ENCODE measurements at regions of chr19 and their contacts with region 1.

Region 1: DNA sequence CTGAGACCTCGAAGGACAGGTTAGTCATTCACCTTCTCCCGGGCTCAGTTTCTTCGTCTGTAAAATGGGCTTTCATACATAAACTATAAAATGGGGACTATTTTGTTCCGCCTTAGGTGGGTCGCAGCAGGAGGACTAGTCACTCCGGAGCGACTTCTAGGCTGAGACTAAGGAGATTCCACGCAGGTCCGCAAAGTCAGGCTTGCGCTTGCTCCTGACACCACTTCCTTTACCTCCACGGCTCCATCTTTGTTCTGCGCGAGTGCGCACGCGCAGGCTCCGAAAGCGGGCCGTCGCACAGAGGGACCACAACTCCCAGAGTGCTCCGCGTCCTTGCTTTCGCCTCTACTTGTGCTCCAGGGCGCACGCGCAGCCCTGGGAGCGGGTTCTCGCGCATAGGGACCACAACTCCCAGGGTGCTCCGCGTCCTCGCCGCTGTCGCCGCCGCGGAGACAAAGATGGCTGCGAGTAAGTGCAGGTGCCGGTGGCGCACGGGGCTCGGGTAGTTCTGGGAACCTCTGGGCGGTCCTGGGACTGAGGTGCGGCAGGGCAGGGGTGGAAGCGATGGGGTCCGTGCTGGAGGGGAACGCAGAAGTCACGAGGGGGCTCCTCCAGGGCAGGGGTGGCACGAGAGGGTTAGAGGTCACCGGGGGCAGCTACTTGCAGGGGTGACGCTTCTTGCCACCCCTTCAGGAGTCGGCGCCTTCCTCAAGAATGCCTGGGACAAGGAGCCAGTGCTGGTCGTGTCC is at the start of gene NDUFA3:
- DNase-seq: peak; percentile 96
- ATAC-seq: peak; percentile 96
- H3K4me3 ChIP-seq: peak within 1 kb of the TSS; percentile 76 to 99 (median 78)
- H3K27ac ChIP-seq: peak within 1 kb of the TSS; percentile 46
- H3K4me1 ChIP-seq: peaks cover 17% of the 10 kb centered on the region
- H3K27me3 ChIP-seq: no peaks in the 10 kb centered on the region; a peak in 1 of 5 replicates
- CTCF ChIP-seq: no peak
- EP300 ChIP-seq: no peak
- POLR2A ChIP-seq: peak; percentile 44 to 87; a peak in 3 of 4 replicates
- RAD21 ChIP-seq: no peak
- total RNA-seq, gene NDUFA3: 70.9 and 75.4 TPM in 2 replicates

Region 2: DNA sequence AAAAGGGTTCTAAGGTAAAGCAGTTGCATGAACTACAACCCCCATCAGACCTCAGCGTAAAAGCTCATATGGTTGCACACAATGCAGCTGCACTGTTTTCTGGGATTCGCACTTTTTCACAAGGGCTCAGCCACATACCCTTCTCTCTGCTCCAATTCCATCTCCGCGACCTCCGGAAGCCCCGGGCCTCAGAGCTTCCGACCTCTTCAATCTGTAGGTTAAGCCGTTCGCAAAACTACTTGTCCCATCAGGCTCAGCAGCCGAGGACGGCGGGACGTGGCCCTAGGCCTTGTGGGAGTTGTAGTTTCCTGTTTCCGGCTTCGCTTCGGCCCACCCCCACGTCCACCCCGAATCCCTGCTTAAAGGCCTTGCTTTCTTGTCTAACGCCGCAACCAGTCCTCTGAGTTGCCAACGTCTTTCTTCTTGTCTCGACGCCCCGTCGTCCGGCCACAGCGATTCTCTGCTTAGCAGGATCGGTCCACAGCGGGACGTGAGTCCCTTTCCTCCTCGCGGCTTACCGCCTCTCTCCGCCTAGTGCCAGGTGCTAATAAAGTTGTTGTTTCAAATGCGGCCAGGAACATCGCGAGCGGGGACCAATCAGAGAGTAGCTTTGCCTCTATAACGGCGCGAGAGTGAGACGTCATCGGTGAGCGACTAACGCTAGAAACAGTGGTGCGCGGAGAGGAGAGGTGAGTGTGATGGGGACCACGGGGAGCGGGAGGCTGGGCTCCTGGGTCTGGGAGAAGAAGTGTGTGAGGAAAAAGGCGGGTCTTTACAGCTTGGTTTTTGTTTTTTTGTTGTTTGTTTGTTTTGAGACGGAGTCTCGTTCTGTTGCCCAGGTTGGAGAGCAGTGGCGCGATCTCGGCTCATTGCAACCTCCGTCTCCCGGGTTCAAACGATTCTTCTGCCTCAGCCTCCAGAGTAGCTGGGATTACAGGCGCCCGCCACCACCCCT is 12.8 kb after region 1 on chr19 and contains the starts of genes PRPF31 and TFPT:
- CTCF ChIA-PET with region 1: no interaction called
- POLR2A ChIA-PET with region 1: interaction called, 14 read pairs
- in situ Hi-C with region 1: no loop called
- intact Hi-C with region 1: no loop called
- DNase-seq: peak; percentile 96
- ATAC-seq: peak; percentile 97
- H3K4me3 ChIP-seq: peak within 1 kb of the TSS; percentile 77 to 91 (median 82)
- H3K27ac ChIP-seq: peak within 1 kb of the TSS; percentile 88
- H3K4me1 ChIP-seq: peaks cover 21% of the 10 kb centered on the region
- H3K27me3 ChIP-seq: no peaks in the 10 kb centered on the region; a peak in 1 of 5 replicates
- CTCF ChIP-seq: no peak
- EP300 ChIP-seq: no peak
- POLR2A ChIP-seq: peak; percentile 75 to 87
- RAD21 ChIP-seq: no peak
- total RNA-seq, gene PRPF31: 63.8 and 68.9 TPM in 2 replicates
- total RNA-seq, gene TFPT: 10.7 and 13.5 TPM in 2 replicates